ENCODE measurements at regions of chr12 and their contacts with region 1.

Region 1: GRCh38 chr12:124992874-124993625 is 395 bp upstream of the BRI3BP start:
- DNase-seq: no peak
- ATAC-seq: peak; percentile 88

Region 2: DNA sequence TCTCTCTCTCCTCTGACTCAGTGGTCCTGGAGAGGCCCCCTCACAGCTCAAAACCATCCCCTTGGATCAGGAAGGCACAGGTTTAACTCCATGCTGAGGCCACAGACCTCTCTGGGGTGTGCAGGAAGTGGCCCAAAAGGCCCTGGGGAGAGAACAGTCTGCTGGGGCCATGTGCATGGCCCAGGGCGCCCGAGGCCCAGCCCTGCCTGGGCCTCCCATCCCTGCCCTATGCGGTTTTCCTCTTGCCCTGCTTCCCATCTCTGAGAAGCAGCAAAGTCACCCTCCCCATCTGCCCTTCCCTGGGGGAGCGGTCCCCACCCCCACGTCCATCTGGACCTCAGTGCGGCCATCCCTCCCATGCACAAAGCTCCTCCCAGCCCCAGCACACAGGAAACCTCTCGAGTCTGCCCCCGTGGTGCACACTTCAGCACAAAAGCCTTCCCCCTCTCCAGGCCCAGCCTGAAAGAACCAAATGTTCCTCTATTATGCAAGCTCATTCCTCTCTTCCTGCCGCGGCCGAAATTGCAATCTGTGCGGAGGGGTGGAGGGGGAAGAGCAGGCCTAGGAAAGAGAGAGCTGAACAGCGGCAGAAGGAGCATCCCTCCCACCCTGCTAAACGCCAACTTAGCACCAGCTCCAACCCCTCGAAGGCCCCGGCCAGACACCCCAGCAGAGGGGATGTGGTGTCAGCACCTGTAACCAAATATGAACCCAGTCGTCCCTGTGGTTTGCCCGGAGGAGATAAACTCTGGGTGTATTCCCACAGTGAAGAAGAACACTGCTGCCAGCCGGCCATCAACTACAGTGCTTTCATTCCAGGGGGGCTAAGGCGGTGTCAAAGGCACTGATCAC is 237.9 kb before region 1 on chr12:
- intact Hi-C with region 1: no loop called
- DNase-seq: peak; percentile 92
- ATAC-seq: peak; percentile 93

Region 3: DNA sequence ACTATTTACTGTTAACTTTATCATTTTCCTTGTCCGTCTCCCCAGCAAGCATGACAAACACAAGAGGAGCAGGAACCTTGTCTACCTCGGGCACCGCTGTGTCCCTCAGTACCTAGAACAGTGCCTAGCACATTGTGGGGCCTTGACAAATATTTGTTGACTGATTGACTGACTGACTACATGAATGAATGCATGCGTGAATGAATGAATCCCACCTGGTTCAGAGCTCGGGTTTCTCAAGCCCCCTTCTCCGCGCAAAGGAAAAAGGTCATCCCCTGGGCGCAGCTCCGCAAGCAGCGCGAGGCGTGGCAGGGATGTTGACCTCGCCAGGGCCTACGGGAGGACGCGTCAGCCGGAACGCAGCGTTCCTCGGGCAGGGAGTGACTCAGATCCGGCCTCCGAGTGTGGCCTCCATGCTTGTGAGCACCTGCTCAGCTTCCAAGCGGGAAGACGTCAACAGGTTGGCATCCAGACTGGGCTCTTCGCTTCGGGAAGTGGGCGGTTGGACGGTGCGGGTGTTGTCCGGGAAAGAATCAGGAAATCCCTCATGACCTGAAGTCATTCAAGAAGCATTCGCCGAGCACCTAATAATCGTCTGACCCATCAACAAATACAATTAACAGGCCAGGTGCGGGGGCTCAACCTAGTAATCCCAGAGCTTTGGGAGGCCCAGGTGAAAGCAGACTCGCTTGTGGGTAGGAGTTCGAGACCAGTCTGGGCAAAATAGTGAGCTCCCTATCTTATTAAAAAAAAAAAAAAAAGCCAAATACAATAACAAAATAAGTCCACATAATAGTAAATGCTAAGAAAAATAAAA is 64.7 kb before region 1 on chr12:
- intact Hi-C with region 1: no loop called
- DNase-seq: peak; percentile 83
- ATAC-seq: peak; percentile 44

Region 4: GRCh38 chr12:125065021-125065795 is 72.2 kb after region 1 on chr12 and contains the start of gene AACS:
- intact Hi-C with region 1: loop called (anchors 5 kb)
- DNase-seq: peak; percentile 86
- ATAC-seq: peak; percentile 97
- total RNA-seq, gene AACS: 11.3 TPM